Activated CD4-positive, alpha-beta T cell treated with anti-CD3 and anti-CD28 coated beads, Interleukin-2, amount 10 ng/mL, durations not matched to agents 24 days and 14 days (primary cell): ENCODE measurements at regions of chr16 and their contacts with region 1.

Region 1: GRCh38 chr16:85086347-85087291 is 25.7 kb downstream of the CIBAR2 start:
- DNase-seq: peak; percentile 94
- H3K4me3 Mint-ChIP-seq: no peak overlapping the region
- H3K27ac Mint-ChIP-seq: no peak overlapping the region
- H3K4me1 Mint-ChIP-seq: peaks cover 2% of the 10 kb centered on the region
- H3K27me3 Mint-ChIP-seq: no peaks in the 10 kb centered on the region

Region 2: DNA sequence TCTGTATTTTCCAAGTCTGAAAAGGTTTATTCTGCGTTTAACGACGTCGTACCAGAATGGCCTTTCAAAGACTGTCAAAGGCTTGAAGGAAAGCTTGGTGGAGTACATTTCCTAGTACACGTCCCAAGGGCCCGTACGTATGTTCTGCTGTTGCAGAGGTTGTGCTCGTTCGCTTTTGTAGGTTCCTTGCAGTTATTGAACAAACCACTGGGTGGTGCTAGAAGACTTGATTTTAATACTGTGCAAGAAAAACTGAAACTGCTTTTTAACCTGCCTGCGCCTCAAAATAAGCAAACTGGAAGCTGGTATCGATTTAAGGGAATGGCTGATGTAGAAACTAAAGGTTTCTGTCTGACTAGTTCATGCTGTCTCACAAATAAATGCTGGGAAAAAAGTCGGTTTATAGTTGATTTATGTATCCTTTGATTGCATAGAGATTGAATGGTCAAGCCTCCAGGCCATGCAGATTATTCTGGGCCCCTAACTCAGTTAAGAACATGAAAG is 332.2 kb before region 1 on chr16:
- intact Hi-C with region 1: loop called (anchors 10 kb)
- DNase-seq: peak; percentile 94
- H3K4me3 Mint-ChIP-seq: peak overlapping the region; percentile 66
- H3K27ac Mint-ChIP-seq: no peak overlapping the region
- H3K4me1 Mint-ChIP-seq: peaks cover 66% of the 10 kb centered on the region
- H3K27me3 Mint-ChIP-seq: no peaks in the 10 kb centered on the region

Region 3: GRCh38 chr16:85010931-85011845 is 75.4 kb before region 1 on chr16 and contains the start of gene ZDHHC7:
- intact Hi-C with region 1: loop called (anchors 1 kb)
- DNase-seq: peak; percentile 96
- H3K4me3 Mint-ChIP-seq: peak within 1 kb of the TSS; percentile 98
- H3K27ac Mint-ChIP-seq: peak within 1 kb of the TSS; percentile 99
- H3K4me1 Mint-ChIP-seq: peaks cover 24% of the 10 kb centered on the region
- H3K27me3 Mint-ChIP-seq: peaks cover 4% of the 10 kb centered on the region
- total RNA-seq, gene ZDHHC7: 28.9 and 30.8 TPM in 2 replicates

Region 4: DNA sequence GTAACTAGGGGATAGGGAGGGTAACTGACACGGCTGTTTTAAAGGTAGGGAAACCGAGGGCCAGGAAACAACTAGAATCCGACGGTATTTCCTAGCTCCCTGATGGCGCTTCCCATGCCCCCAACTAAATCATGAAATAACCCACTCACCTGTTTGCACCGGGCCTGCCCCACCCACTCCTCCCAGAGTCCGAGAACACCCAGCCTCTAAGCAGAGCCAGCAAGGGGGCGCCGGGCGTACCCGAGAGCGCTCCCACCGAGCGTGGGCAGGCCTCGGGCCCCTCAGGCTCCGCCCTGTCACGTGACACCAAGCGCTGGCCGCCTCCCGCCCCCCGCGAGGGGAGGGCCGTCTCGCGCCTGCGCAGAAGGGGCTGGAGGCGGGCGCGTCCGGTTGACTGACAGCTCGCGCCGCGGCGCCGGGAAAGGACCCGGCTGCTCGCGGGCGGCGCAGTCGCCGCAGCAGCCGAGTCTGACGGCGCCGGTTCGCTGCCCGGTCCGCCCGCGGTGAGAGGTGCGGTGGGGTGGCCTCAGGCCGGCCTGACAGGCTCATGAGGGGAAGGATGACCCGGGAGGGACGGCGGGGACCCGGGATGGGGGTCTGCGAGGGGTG is 59.2 kb before region 1 on chr16 and contains the start of gene KIAA0513:
- intact Hi-C with region 1: loop called (anchors 1 kb)
- DNase-seq: peak; percentile 99
- H3K4me3 Mint-ChIP-seq: peak within 1 kb of the TSS; percentile 89
- H3K27ac Mint-ChIP-seq: peak within 1 kb of the TSS; percentile 93
- H3K4me1 Mint-ChIP-seq: peaks cover 36% of the 10 kb centered on the region
- H3K27me3 Mint-ChIP-seq: peaks cover 1% of the 10 kb centered on the region
- total RNA-seq, gene KIAA0513: 10.6 and 12.1 TPM in 2 replicates

Region 5: GRCh38 chr16:85055503-85056210 is 31.0 kb before region 1 on chr16:
- intact Hi-C with region 1: loop called (anchors 1 kb)
- DNase-seq: peak; percentile 93
- H3K4me3 Mint-ChIP-seq: peak overlapping the region; percentile 71
- H3K27ac Mint-ChIP-seq: peak overlapping the region; percentile 93
- H3K4me1 Mint-ChIP-seq: peaks cover 35% of the 10 kb centered on the region
- H3K27me3 Mint-ChIP-seq: no peaks in the 10 kb centered on the region

Region 6: DNA sequence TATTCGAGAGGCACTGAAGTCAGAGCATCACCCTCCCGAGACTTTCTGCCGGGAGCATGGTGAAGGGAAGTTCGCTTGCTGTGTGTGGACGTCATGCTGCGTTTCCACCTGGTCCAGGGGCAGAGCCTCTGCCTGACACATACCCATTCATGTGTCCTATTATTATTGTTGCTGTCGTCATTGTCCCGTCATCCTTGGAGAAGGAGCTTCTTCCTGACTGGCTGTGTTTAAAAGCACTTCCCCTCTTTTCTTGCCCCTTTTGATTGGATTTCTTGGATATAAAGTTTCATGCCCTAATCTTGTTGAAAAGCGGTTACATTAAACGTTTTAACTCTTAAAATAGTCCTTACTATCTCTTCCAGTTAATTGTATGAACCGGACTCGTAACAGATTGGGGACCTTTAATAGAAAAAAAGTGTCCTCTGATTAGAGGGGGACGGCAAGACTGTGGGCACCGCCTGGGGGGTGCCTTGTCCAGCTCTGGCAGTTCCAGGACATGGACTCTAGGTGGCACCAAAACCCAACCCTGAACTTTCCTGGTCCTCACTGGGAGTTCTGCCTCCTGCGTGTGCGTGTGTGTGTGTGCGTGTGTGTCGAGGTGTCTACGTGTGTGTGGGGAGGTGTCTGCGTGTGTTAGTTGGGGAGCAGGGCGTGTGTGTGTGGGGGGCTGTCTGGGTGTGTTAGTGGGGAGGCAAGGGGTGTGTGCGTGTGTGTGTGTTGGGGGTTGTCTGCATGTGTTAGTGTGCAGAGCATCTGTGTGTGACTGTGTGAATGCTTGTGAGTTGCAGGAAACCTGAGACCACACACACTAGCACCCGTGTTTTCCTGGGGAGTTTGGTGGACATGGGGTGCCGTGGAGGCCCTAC is 158.9 kb after region 1 on chr16:
- intact Hi-C with region 1: no loop called
- DNase-seq: peak; percentile 82
- H3K4me3 Mint-ChIP-seq: no peak overlapping the region
- H3K27ac Mint-ChIP-seq: no peak overlapping the region
- H3K4me1 Mint-ChIP-seq: peaks cover 3% of the 10 kb centered on the region
- H3K27me3 Mint-ChIP-seq: peaks cover 7% of the 10 kb centered on the region